Activated T-helper 2 cell treated with anti-CD3 and anti-CD28 coated beads, Interferon-gamma antibody, Interleukin-2, Interleukin-4, amounts not matched to agents 10 μg/mL and 5 μg/mL and 100 μg/mL, durations not matched to agents 14 hours and 24 hours and 36 hours (primary cell): ENCODE measurements at regions of chr19 and their contacts with region 1.

Region 1: GRCh38 chr19:46030812-46031550 is 8.1 kb upstream of the PGLYRP1 start:
- DNase-seq: no peak
- H3K4me3 Mint-ChIP-seq: no peak overlapping the region
- H3K27ac Mint-ChIP-seq: no peak overlapping the region
- H3K4me1 Mint-ChIP-seq: peaks cover 11% of the 10 kb centered on the region
- H3K27me3 Mint-ChIP-seq: peaks cover 18% of the 10 kb centered on the region

Region 2: DNA sequence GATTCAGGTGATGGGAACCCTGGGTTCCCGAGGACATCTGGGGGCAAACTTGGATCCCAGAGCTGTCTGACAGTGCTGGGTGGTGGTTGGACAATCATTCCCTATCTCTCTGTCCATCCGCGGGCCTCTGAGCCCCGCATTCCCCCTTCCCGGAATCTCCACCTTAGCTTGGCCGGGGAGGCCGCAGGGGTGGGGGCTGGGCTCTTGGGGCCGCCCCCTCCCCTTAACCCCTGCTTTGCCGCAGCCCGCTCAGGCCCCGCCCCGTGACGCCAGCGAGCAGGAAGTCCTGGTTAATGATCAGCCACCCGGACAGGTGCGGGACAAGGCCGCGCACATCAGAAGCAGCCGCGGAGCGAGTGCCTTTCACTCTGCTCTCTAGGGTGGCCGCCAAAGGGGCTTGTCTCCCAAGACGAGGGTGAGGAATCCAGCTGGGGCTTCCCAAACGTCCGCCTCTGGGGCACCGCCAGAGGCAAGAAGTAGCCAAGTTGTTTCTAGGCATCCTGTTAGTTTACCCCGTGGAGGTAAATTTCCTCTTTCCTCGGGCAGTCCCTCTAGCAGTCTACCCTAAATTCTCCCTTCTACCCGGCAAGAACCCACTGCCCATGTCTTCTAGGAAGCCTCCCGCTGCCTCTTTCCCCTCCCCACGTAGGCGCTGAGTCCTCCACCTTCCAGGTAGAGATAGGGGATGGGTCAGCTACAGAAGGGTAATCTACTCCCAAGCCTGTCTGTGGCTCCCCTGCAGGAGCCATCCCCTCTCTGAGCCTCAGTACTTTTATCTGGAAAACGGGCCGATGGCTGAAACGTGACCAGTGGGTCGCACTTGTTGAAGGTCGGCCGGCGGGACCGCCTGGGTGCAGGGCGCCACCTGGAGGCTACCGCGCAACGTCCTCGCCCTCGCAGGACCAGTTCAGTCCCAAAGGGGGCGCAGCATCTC is 148.1 kb before region 1 on chr19:
- intact Hi-C with region 1: no loop called
- DNase-seq: peak; percentile 81
- H3K4me3 Mint-ChIP-seq: peak overlapping the region; percentile 66
- H3K27ac Mint-ChIP-seq: peak overlapping the region; percentile 18
- H3K4me1 Mint-ChIP-seq: peaks cover 21% of the 10 kb centered on the region
- H3K27me3 Mint-ChIP-seq: no peaks in the 10 kb centered on the region

Region 3: DNA sequence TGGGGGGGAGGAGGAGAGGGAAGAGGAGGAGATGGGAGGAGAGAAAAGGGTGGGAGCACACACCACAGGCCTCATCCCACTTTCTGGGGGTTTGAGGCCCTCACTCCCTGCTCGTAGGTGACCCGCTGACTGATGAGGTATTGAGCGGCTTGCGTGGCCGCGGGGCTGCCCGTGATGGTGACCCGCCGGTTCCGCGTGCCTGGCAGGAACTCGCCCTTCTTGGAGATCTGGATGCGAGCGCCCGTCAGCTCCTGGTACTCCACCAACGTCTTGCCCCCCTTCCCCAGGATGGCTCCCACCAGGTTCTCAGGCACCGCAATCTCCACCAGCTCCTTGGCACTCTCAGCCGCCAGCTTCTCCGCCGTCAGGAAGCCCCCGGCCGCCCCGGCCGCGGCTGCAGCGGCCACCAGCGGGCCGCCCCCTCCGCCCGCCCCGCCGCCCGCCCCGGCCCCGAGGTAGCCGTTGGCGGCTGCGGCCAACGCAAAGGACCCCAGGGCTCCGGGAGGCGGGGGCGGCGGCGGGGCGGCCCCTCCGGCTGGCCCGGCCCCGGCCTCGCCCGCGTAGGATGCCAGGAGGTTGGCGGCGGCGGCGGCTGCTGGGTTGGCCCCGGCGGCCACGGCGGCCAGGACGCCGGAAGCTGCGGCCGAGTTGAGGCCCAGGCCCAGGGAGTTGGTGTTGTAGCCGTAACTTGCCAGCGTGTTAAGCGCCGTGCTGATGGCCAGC is 91.0 kb before region 1 on chr19:
- intact Hi-C with region 1: no loop called
- DNase-seq: no peak
- H3K4me3 Mint-ChIP-seq: no peak overlapping the region
- H3K27ac Mint-ChIP-seq: no peak overlapping the region
- H3K4me1 Mint-ChIP-seq: no peaks in the 10 kb centered on the region
- H3K27me3 Mint-ChIP-seq: peaks cover 29% of the 10 kb centered on the region

Region 4: GRCh38 chr19:46009530-46010510 is 21.2 kb before region 1 on chr19:
- intact Hi-C with region 1: no loop called
- DNase-seq: peak; percentile 55
- H3K4me3 Mint-ChIP-seq: no peak overlapping the region
- H3K27ac Mint-ChIP-seq: no peak overlapping the region
- H3K4me1 Mint-ChIP-seq: peaks cover 3% of the 10 kb centered on the region
- H3K27me3 Mint-ChIP-seq: peaks cover 5% of the 10 kb centered on the region

Region 5: GRCh38 chr19:46189971-46190888 is 159.2 kb after region 1 on chr19:
- intact Hi-C with region 1: loop called (anchors 2 kb)
- DNase-seq: no peak
- H3K4me3 Mint-ChIP-seq: no peak overlapping the region
- H3K27ac Mint-ChIP-seq: no peak overlapping the region
- H3K4me1 Mint-ChIP-seq: peaks cover 19% of the 10 kb centered on the region
- H3K27me3 Mint-ChIP-seq: peaks cover 37% of the 10 kb centered on the region